CD8-positive, alpha-beta T cell (primary cell): ENCODE measurements at regions of chr6 and their contacts with region 1.

Region 1: GRCh38 chr6:3742426-3743344 is 8.8 kb downstream of the PXDC1 start:
- DNase-seq: peak; percentile 79 to 97 (median 87)
- ATAC-seq: peak; percentile 91
- H3K4me3 ChIP-seq: peak overlapping the region in 1 of 2 experiments; percentile 22
- H3K4me3 Mint-ChIP-seq: peak overlapping the region; percentile 47
- H3K27ac ChIP-seq: no peak overlapping the region
- H3K27ac Mint-ChIP-seq: no peak overlapping the region
- H3K4me1 ChIP-seq: peaks cover 9% of the 10 kb centered on the region
- H3K4me1 Mint-ChIP-seq: peaks cover 6% of the 10 kb centered on the region
- H3K27me3 ChIP-seq: peaks cover 0 to 2% of the 10 kb centered on the region in 2 experiments
- H3K27me3 Mint-ChIP-seq: peaks cover 11% of the 10 kb centered on the region
- CTCF ChIP-seq: peak; percentile 88

Region 2: GRCh38 chr6:3118353-3119039 is 624.2 kb before region 1 on chr6 and contains the start of gene BPHL:
- CTCF ChIA-PET with region 1: no interaction called
- POLR2A ChIA-PET with region 1: no interaction called
- intact Hi-C with region 1: loop called in 1 of 2 experiments (anchors 5 kb)
- DNase-seq: peak; percentile 97 to 100 (median 99)
- ATAC-seq: peak; percentile 95
- H3K4me3 ChIP-seq: peak within 1 kb of the TSS; percentile 63 to 80
- H3K4me3 Mint-ChIP-seq: peak within 1 kb of the TSS; percentile 92
- H3K27ac ChIP-seq: peak within 1 kb of the TSS; percentile 85 to 90
- H3K27ac Mint-ChIP-seq: peak within 1 kb of the TSS; percentile 96
- H3K4me1 ChIP-seq: peaks cover 12% of the 10 kb centered on the region
- H3K4me1 Mint-ChIP-seq: peaks cover 13% of the 10 kb centered on the region
- H3K27me3 ChIP-seq: no peaks in the 10 kb centered on the region
- H3K27me3 Mint-ChIP-seq: no peaks in the 10 kb centered on the region
- CTCF ChIP-seq: no peak
- total RNA-seq, gene BPHL: 3.7 to 5.5 TPM

Region 3: DNA sequence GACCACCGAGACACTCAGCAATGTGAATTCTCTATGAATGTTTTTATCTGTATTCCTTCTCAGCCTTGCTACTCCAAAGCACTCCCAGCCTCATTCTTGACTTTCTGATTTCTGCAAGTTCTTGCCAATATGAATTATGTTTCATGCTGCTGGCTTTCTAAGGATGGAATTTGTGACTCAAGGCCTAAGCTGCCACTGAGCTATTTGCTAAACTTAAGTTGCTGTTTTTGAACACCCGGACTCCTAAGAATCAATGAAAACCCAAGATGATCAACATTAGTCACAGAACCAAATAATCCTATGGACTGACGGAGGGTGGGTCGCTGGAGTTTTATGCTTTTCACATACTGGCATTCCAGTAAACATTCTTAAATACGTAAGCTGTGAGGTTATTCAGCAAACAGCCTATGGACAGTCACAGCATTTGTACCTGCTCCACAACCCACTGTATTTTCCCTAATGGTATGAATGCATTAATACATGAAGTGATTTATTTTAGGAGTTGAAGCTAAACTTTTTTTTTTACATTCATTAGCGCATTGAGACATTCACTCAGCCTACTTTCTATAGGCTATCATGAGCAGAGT is 17.1 kb after region 1 on chr6:
- CTCF ChIA-PET with region 1: interaction called, 10 read pairs
- POLR2A ChIA-PET with region 1: no interaction called
- intact Hi-C with region 1: no loop called
- DNase-seq: no peak
- ATAC-seq: no peak
- H3K4me3 ChIP-seq: no peak overlapping the region
- H3K4me3 Mint-ChIP-seq: no peak overlapping the region
- H3K27ac ChIP-seq: no peak overlapping the region
- H3K27ac Mint-ChIP-seq: no peak overlapping the region
- H3K4me1 ChIP-seq: no peaks in the 10 kb centered on the region
- H3K4me1 Mint-ChIP-seq: no peaks in the 10 kb centered on the region
- H3K27me3 ChIP-seq: no peaks in the 10 kb centered on the region
- H3K27me3 Mint-ChIP-seq: peaks cover 1% of the 10 kb centered on the region
- CTCF ChIP-seq: no peak

Region 4: GRCh38 chr6:3929281-3929798 is 186.7 kb after region 1 on chr6:
- CTCF ChIA-PET with region 1: interaction called, 33 read pairs
- POLR2A ChIA-PET with region 1: no interaction called
- intact Hi-C with region 1: loop called (anchors 1 kb)
- DNase-seq: no peak
- ATAC-seq: no peak
- H3K4me3 ChIP-seq: no peak overlapping the region
- H3K4me3 Mint-ChIP-seq: no peak overlapping the region
- H3K27ac ChIP-seq: no peak overlapping the region
- H3K27ac Mint-ChIP-seq: no peak overlapping the region
- H3K4me1 ChIP-seq: no peaks in the 10 kb centered on the region
- H3K4me1 Mint-ChIP-seq: no peaks in the 10 kb centered on the region
- H3K27me3 ChIP-seq: no peaks in the 10 kb centered on the region
- H3K27me3 Mint-ChIP-seq: peaks cover 10% of the 10 kb centered on the region
- CTCF ChIP-seq: no peak

Region 5: DNA sequence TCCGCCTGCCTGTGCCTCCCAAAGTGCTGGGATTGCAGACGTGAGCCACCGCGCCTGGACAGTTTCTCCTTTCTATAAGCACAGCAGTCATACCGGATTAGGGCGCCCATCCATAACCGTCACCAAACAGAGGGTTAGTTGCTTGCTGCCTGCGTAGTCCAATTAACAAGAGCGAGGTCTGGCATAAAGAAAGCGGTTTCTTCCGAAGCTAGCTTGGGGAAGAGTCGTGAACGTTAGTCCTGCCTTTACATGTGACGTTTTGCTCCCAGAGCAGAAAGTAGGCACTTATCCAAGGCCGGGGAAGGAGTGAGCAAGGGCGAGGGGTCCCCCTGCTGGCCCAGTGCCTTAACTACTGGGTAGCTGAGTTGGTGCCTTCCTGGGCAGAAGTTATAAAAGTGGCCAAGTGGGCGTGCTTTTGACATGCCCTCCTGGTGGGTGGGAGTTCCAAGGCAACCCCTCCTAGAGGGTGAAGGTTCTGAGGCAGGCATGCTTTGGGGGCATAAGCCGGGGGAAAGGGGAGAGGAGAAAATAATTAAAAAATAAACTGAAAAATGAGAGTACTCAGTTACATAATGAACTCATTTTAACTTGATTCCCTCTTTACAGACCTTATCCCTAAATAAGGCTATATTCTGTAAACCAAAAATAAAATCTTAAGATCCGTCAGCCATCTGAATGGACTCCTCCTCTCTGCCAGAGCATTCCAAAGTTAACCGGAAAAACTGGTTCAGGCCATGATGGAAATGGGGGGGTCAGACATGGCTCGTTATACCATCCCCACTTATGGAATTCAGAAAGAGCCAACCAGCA is 248.2 kb after region 1 on chr6:
- CTCF ChIA-PET with region 1: interaction called, 6 read pairs
- POLR2A ChIA-PET with region 1: no interaction called
- intact Hi-C with region 1: loop called (anchors 1 kb)
- DNase-seq: peak; percentile 42 to 75 (median 71)
- ATAC-seq: peak; percentile 98
- H3K4me3 ChIP-seq: no peak overlapping the region
- H3K4me3 Mint-ChIP-seq: no peak overlapping the region
- H3K27ac ChIP-seq: no peak overlapping the region
- H3K27ac Mint-ChIP-seq: no peak overlapping the region
- H3K4me1 ChIP-seq: no peaks in the 10 kb centered on the region
- H3K4me1 Mint-ChIP-seq: peaks cover 18% of the 10 kb centered on the region
- H3K27me3 ChIP-seq: no peaks in the 10 kb centered on the region
- H3K27me3 Mint-ChIP-seq: no peaks in the 10 kb centered on the region
- CTCF ChIP-seq: peak; percentile 73

Region 6: DNA sequence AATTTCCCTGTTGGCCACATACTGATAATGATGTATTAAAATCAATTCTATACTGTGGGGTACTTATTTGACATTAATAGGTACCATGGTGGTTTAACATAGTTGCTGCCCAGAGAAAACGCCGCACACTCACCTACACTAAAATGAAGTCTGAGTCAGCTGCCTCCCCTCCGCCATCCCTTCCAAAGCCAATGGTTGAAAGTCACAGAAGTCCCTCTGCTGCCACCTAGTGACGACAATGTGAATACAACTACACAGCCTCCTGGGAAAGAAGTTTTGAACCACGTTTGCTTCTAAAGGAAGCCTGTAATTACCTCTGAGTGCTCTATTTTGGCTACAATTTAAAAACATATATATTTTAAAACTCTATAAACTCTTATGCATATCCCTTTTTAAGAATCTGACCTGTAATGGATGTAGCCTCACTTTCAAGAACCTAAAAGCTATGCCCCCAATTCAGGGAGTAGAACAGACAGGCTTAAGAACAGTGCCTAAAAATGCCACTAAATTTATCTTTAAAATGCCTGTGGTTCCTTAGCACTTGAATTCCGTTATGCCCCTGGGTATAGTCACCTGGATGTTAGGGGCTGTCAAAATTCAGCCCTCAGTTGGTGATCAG is 413.3 kb after region 1 on chr6:
- CTCF ChIA-PET with region 1: interaction called, 64 read pairs
- POLR2A ChIA-PET with region 1: no interaction called
- intact Hi-C with region 1: loop called (anchors 1 kb)
- DNase-seq: peak; percentile 53 to 88 (median 77)
- ATAC-seq: peak; percentile 99
- H3K4me3 ChIP-seq: no peak overlapping the region
- H3K4me3 Mint-ChIP-seq: no peak overlapping the region
- H3K27ac ChIP-seq: no peak overlapping the region
- H3K27ac Mint-ChIP-seq: no peak overlapping the region
- H3K4me1 ChIP-seq: no peaks in the 10 kb centered on the region
- H3K4me1 Mint-ChIP-seq: peaks cover 3% of the 10 kb centered on the region
- H3K27me3 ChIP-seq: no peaks in the 10 kb centered on the region
- H3K27me3 Mint-ChIP-seq: peaks cover 4% of the 10 kb centered on the region
- CTCF ChIP-seq: peak; percentile 92

Region 7: DNA sequence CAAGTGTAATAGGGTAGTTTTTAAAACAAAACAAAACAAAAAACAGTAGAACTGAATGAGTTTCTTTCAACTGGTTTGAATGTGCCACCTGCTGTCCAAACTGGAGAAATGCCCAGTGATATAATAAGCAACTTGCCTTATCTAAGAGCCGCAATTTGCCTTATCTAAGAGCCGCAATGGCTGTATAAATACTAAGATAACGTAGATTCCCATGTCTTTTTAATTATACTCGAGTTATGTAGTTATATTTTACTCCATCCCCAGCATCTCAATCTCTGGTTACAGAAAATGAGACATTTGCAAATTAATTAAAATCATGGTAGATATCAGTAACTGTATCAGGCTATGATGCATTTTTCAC is 1194.0 kb after region 1 on chr6:
- CTCF ChIA-PET with region 1: no interaction called
- POLR2A ChIA-PET with region 1: no interaction called
- intact Hi-C with region 1: loop called (anchors 5 kb)
- DNase-seq: peak in 2 of 9 experiments; percentile 43 to 61
- ATAC-seq: no peak
- H3K4me3 ChIP-seq: no peak overlapping the region
- H3K4me3 Mint-ChIP-seq: no peak overlapping the region
- H3K27ac ChIP-seq: no peak overlapping the region
- H3K27ac Mint-ChIP-seq: no peak overlapping the region
- H3K4me1 ChIP-seq: peaks cover 22% of the 10 kb centered on the region
- H3K4me1 Mint-ChIP-seq: peaks cover 57% of the 10 kb centered on the region
- H3K27me3 ChIP-seq: no peaks in the 10 kb centered on the region
- H3K27me3 Mint-ChIP-seq: no peaks in the 10 kb centered on the region
- CTCF ChIP-seq: peak; percentile 59